ENCODE measurements at regions of chr14 and their contacts with region 1.

Region 1: GRCh38 chr14:50060871-50061663 is 55.3 kb downstream of the VCPKMT start:
- DNase-seq: peak; percentile 75
- ATAC-seq: peak; percentile 15
- H3K4me3 Mint-ChIP-seq: peak overlapping the region; percentile 83
- H3K27ac Mint-ChIP-seq: peak overlapping the region; percentile 99
- H3K4me1 Mint-ChIP-seq: peaks cover 71% of the 10 kb centered on the region
- H3K27me3 Mint-ChIP-seq: no peaks in the 10 kb centered on the region
- CTCF ChIP-seq: no peak

Region 2: GRCh38 chr14:49940808-49941421 is 120.2 kb before region 1 on chr14:
- CTCF ChIA-PET with region 1: no interaction called
- POLR2A ChIA-PET with region 1: no interaction called
- intact Hi-C with region 1: no loop called
- DNase-seq: no peak
- ATAC-seq: no peak
- H3K4me3 Mint-ChIP-seq: no peak overlapping the region
- H3K27ac Mint-ChIP-seq: peak overlapping the region; percentile 78
- H3K4me1 Mint-ChIP-seq: peaks cover 52% of the 10 kb centered on the region
- H3K27me3 Mint-ChIP-seq: no peaks in the 10 kb centered on the region
- CTCF ChIP-seq: no peak

Region 3: GRCh38 chr14:49971156-49972130 is 89.6 kb before region 1 on chr14:
- CTCF ChIA-PET with region 1: no interaction called
- POLR2A ChIA-PET with region 1: interaction called, 12 read pairs
- intact Hi-C with region 1: no loop called
- DNase-seq: peak; percentile 90
- ATAC-seq: peak; percentile 75
- H3K4me3 Mint-ChIP-seq: peak overlapping the region; percentile 69
- H3K27ac Mint-ChIP-seq: peak overlapping the region; percentile 94
- H3K4me1 Mint-ChIP-seq: peaks cover 56% of the 10 kb centered on the region
- H3K27me3 Mint-ChIP-seq: no peaks in the 10 kb centered on the region
- CTCF ChIP-seq: no peak

Region 4: GRCh38 chr14:50045039-50045711 is 15.9 kb before region 1 on chr14:
- CTCF ChIA-PET with region 1: interaction called, 14 read pairs
- POLR2A ChIA-PET with region 1: interaction called, 74 read pairs
- intact Hi-C with region 1: loop called (anchors 2 kb)
- DNase-seq: peak; percentile 91
- ATAC-seq: peak; percentile 85
- H3K4me3 Mint-ChIP-seq: peak overlapping the region; percentile 2
- H3K27ac Mint-ChIP-seq: peak overlapping the region; percentile 87
- H3K4me1 Mint-ChIP-seq: peaks cover 61% of the 10 kb centered on the region
- H3K27me3 Mint-ChIP-seq: no peaks in the 10 kb centered on the region
- CTCF ChIP-seq: no peak

Region 5: DNA sequence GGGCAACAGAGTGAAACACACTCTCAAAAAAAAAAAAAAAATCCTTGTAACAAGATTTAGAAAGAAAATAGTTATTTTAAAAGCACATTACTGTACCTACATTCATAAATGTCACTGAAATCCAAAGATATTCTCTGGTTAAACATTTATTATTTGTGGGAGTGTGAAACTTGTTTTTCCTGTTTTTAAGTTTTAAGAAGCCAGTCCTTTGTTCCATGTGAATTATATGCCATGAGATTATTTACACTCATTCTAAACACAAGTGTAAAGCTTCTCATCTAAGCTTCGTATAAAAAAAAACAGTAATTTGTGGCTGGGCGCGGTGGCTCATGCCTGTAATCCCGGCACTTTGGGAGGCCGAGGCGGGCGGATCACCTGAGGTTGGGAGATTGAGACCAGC is 40.4 kb after region 1 on chr14:
- CTCF ChIA-PET with region 1: interaction called, 27 read pairs
- POLR2A ChIA-PET with region 1: interaction called, 11 read pairs
- intact Hi-C with region 1: no loop called
- DNase-seq: no peak
- ATAC-seq: no peak
- H3K4me3 Mint-ChIP-seq: no peak overlapping the region
- H3K27ac Mint-ChIP-seq: no peak overlapping the region
- H3K4me1 Mint-ChIP-seq: peaks cover 66% of the 10 kb centered on the region
- H3K27me3 Mint-ChIP-seq: no peaks in the 10 kb centered on the region
- CTCF ChIP-seq: no peak

Region 6: DNA sequence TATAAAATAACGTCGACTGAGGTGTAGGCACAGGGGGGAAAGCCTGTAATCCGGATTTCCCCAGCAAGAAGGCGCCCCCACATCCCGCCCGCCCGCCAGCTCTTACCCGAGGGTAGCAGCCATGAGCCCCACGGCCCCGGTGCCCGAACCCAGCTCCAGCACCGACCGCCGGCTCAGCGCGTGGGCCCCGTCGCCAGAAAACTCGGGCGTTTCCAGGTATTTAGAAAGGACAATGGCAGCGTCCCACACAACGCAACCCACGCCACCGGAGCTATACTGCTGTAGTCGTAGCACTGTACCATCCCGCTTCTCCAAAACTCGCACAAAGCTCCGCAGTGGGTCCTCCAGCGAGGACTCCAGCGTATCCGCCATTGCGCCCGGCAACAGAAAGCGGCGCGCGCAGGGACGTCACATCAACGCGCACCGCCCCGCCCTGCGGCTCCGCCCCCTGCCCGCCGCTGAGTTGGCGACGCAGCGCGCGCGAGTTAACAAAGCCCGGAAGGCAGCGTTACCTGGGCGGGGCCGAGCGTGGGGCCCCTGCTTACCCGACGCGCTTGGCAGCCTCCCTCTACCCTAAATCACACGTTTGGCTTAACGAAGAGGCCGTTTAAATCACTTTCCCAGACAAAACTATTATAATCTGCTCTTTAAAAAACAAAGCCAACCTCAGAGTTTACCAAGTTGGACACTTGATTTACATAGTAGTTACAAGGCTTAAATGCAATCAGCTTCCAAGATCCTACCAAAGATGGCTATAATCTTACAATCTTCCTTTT is 55.3 kb after region 1 on chr14 and contains the start of gene VCPKMT:
- CTCF ChIA-PET with region 1: no interaction called
- POLR2A ChIA-PET with region 1: interaction called, 13 read pairs
- intact Hi-C with region 1: no loop called
- DNase-seq: peak; percentile 97
- ATAC-seq: peak; percentile 100
- H3K4me3 Mint-ChIP-seq: peak within 1 kb of the TSS; percentile 94
- H3K27ac Mint-ChIP-seq: peak within 1 kb of the TSS; percentile 98
- H3K4me1 Mint-ChIP-seq: peaks cover 32% of the 10 kb centered on the region
- H3K27me3 Mint-ChIP-seq: no peaks in the 10 kb centered on the region
- CTCF ChIP-seq: no peak
- total RNA-seq, gene VCPKMT: 11.4 to 11.6 TPM